Activated CD4-positive, alpha-beta memory T cell treated with anti-CD3 and anti-CD28 coated beads, Interleukin-2, amount 10 ng/mL, durations not matched to agents 7 days and 5 days (primary cell): ENCODE measurements at regions of chr2 and their contacts with region 1.

Region 1: GRCh38 chr2:230319211-230319862 is 7.7 kb upstream of the SP140L start:
- DNase-seq: peak; percentile 87
- H3K4me3 Mint-ChIP-seq: peak overlapping the region; percentile 61
- H3K27ac Mint-ChIP-seq: peak overlapping the region; percentile 94
- H3K4me1 Mint-ChIP-seq: peaks cover 64% of the 10 kb centered on the region
- H3K27me3 Mint-ChIP-seq: no peaks in the 10 kb centered on the region

Region 2: GRCh38 chr2:230000118-230000841 is 319.1 kb before region 1 on chr2:
- CTCF ChIA-PET with region 1: no interaction called
- POLR2A ChIA-PET with region 1: no interaction called
- DNase-seq: no peak
- H3K4me3 Mint-ChIP-seq: no peak overlapping the region
- H3K27ac Mint-ChIP-seq: no peak overlapping the region
- H3K4me1 Mint-ChIP-seq: peaks cover 10% of the 10 kb centered on the region
- H3K27me3 Mint-ChIP-seq: no peaks in the 10 kb centered on the region

Region 3: DNA sequence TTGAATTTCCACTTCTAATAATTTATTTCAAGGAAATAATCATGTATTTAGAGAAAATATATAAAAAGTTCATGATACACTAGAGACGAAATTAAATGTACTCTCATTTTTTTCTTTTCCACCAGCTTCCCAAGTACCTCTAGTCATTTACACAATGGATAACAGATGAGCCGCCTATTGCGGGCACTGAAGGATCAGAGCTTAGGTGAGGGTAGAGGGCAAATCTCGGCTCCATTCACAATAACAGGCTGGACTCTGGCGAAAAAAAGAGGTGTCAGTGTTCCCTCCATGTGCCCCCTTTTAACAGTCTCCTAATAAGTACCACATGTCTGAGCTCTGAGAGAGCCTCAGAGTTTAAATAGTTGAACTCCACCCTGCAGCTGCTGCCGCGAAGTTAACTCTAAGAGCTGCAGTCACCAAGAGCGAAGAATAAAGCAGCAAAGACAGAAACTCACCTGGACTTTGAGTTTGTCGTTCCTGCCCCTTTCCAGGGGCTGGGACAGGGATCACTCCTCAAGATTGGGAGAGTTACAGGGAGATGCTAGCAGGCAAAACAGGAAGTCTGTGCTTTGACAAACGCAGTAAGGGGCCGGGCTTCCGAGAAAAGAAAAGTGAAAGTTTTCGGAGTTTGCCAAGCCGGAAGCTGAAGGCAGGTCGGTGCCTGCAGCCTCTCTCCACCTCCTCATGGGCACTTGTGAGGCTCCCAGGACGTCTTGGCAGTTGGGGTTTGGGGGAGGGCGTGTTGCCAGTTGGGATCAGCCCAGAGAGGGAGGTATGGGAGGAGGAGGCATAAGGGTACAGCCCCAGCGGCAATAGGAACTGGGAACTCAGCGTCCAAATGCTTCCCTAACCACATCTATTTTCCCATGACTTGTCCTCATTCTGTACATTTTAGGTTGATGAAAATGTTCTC is 99.7 kb before region 1 on chr2 and contains the start of gene SP110:
- CTCF ChIA-PET with region 1: interaction called, 4 read pairs
- POLR2A ChIA-PET with region 1: interaction called, 30 read pairs
- DNase-seq: peak; percentile 88
- H3K4me3 Mint-ChIP-seq: peak within 1 kb of the TSS; percentile 94
- H3K27ac Mint-ChIP-seq: peak within 1 kb of the TSS; percentile 91
- H3K4me1 Mint-ChIP-seq: peaks cover 75% of the 10 kb centered on the region
- H3K27me3 Mint-ChIP-seq: no peaks in the 10 kb centered on the region
- total RNA-seq, gene SP110: 125 to 128 TPM

Region 4: GRCh38 chr2:230225486-230225885 is 93.9 kb before region 1 on chr2 and contains the start of gene SP140:
- CTCF ChIA-PET with region 1: interaction called, 4 read pairs
- POLR2A ChIA-PET with region 1: interaction called, 30 read pairs
- DNase-seq: peak; percentile 88
- H3K4me3 Mint-ChIP-seq: peak within 1 kb of the TSS; percentile 77
- H3K27ac Mint-ChIP-seq: peak within 1 kb of the TSS; percentile 94
- H3K4me1 Mint-ChIP-seq: peaks cover 64% of the 10 kb centered on the region
- H3K27me3 Mint-ChIP-seq: no peaks in the 10 kb centered on the region
- total RNA-seq, gene SP140: 132 to 137 TPM

Region 5: DNA sequence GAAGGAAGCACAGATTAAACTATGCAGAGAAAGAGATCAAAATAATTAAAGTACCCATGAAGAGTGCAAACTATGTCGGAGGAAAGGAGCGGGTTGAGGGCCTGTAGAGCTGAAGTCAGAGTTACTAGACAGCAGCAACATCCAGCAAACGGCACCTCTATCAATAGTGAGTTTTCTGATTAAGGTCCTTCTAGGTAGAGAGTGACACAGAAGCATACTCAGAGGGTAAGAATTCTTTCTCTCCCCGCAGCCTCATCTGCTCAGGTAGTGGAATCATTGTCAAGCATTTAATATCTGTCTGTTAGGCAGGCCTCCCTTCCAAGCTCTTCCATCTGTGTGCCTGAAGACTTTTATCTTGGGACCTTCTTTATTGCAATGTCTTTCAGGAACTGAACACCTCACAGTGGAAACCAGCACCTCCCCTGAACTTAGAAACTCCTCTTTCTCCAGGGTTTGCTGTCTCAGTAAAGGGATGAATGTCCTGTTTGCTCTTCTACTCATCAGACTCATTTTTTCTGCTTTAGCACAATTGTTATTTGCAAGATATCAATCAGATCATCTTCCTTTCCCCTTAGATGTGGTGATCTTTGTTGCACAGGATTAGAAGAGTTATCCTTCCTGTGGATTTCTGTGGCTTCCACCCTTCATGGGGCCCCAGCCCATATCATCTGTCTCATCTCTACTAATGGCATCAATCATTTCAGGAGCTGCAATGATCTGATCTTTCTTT is 65.0 kb before region 1 on chr2:
- CTCF ChIA-PET with region 1: interaction called, 3 read pairs
- POLR2A ChIA-PET with region 1: interaction called, 16 read pairs
- DNase-seq: peak; percentile 45
- H3K4me3 Mint-ChIP-seq: no peak overlapping the region
- H3K27ac Mint-ChIP-seq: no peak overlapping the region
- H3K4me1 Mint-ChIP-seq: peaks cover 12% of the 10 kb centered on the region
- H3K27me3 Mint-ChIP-seq: no peaks in the 10 kb centered on the region

Region 6: DNA sequence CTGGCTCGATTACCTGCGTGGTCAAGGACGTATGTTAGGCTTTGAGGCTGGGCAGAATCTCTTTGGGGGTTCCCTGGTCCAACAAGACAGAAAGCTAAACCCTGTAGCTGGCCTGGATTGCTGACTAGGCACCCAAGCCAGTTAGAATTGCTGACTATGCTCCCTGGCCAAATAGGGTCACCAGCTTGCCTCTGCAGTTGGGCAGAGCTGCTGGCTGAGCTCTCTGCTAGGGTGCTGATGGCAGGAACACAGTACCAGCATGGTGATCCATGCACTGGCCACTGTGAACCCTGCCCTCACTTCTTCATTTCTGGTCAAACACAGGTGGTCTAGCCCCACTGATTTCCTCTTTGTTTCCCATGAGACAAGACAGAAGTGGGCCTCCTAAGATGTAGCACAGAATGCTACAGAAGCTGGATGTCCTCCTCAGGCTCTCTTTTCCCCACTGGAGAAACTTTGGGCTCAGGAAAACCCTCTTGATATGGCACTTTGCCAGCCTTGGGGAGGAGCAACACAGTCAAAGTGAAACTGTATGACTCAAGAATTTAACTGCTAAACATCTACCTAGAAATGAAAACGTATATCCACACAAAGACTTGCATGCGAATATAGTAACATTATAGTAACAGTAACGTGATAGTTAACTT is 28.4 kb after region 1 on chr2:
- CTCF ChIA-PET with region 1: interaction called, 3 read pairs
- POLR2A ChIA-PET with region 1: interaction called, 14 read pairs
- DNase-seq: peak; percentile 63
- H3K4me3 Mint-ChIP-seq: peak overlapping the region; percentile 63
- H3K27ac Mint-ChIP-seq: peak overlapping the region; percentile 92
- H3K4me1 Mint-ChIP-seq: peaks cover 72% of the 10 kb centered on the region
- H3K27me3 Mint-ChIP-seq: no peaks in the 10 kb centered on the region